Activated B cell treated with CpG ODN at 0.5 μM for 24 hours (primary cell): ENCODE measurements at regions of chr4 and their contacts with region 1.

Region 1: GRCh38 chr4:108650212-108651013 is at the start of gene OSTC:
- DNase-seq: peak; percentile 87
- ATAC-seq: peak; percentile 93
- H3K4me3 Mint-ChIP-seq: peak within 1 kb of the TSS; percentile 97
- H3K27ac Mint-ChIP-seq: peak within 1 kb of the TSS; percentile 97
- H3K4me1 Mint-ChIP-seq: peaks cover 38% of the 10 kb centered on the region
- H3K27me3 Mint-ChIP-seq: no peaks in the 10 kb centered on the region
- CTCF ChIP-seq: no peak
- total RNA-seq, gene OSTC: 56.7 and 60.1 TPM in 2 replicates

Region 2: GRCh38 chr4:107719922-107720722 is 930.3 kb before region 1 on chr4 and contains the start of gene PAPSS1:
- CTCF ChIA-PET with region 1: no interaction called
- POLR2A ChIA-PET with region 1: interaction called, 9 read pairs
- intact Hi-C with region 1: loop called (anchors 1 kb)
- DNase-seq: peak; percentile 92
- ATAC-seq: peak; percentile 87
- H3K4me3 Mint-ChIP-seq: peak within 1 kb of the TSS; percentile 97
- H3K27ac Mint-ChIP-seq: peak within 1 kb of the TSS; percentile 96
- H3K4me1 Mint-ChIP-seq: peaks cover 34% of the 10 kb centered on the region
- H3K27me3 Mint-ChIP-seq: no peaks in the 10 kb centered on the region
- CTCF ChIP-seq: no peak
- total RNA-seq, gene PAPSS1: 31.8 and 34.2 TPM in 2 replicates

Region 3: DNA sequence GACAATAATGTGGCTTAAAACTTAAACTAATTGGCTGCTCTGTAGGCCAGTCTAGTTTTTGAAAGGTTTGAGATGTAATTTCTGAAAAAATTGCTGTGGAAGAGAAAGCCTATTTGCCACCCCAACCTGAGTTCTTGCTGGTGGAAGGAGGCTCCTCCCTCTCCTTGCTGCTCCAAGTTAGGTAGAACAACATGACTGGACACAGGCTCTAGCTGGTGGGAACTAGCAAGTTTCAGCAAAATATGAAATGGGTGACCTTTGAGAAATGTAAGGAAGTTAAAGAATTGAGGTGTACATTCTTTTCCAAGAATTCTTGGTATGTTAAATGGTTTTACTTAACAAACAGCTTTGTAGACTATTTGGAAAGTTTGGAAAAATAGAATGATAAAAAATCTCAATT is 22.0 kb before region 1 on chr4:
- CTCF ChIA-PET with region 1: no interaction called
- POLR2A ChIA-PET with region 1: interaction called, 22 read pairs
- intact Hi-C with region 1: no loop called
- DNase-seq: no peak
- ATAC-seq: no peak
- H3K4me3 Mint-ChIP-seq: no peak overlapping the region
- H3K27ac Mint-ChIP-seq: no peak overlapping the region
- H3K4me1 Mint-ChIP-seq: peaks cover 11% of the 10 kb centered on the region
- H3K27me3 Mint-ChIP-seq: no peaks in the 10 kb centered on the region
- CTCF ChIP-seq: no peak

Region 4: DNA sequence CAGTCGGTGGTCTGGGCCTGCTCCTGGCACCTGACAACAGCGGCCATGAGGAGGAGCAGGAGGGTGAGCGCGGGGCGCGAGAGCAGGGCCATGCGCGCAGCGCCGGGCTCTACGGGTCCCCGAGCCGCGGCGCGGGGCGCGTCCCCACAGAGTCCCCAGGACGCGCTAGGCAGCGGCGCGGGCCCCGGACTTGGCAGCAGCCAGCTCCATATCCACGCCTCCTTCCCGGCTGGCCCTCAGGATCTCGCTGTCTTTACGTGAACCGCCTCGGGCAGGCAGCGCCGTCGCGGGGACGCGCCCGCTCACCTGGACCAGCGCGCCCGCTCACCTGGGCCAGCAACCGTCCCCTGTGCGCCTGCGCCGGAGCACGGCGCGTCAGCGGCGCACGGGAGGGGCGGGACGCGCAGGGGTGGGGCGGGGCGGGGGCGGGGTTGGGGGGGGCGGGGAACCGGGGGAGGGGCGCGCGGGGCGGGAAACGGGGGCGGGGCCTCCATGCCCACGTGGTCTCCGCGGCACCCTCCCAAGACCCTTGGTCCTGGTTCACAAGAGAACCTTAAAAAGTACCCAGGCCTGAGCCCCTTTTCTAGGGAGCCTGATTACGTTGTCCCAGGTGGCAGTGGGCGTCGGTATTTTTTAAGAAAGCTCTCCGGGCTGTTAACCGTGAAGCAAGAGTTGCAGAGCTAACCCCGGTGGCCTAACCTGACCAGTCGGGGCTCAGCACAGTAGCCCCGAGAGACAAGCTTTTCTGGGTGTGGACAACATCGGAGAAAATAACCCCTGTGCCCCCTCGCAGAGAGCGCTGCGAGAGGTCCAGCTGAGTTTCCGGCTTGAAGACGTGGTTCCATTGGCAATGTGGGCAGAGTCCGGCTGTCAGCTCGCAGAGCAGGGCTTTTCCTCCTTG is 1079.6 kb after region 1 on chr4 and contains the start of gene PLA2G12A:
- CTCF ChIA-PET with region 1: no interaction called
- POLR2A ChIA-PET with region 1: interaction called, 3 read pairs
- intact Hi-C with region 1: loop called (anchors 1 kb)
- DNase-seq: peak; percentile 77
- ATAC-seq: peak; percentile 90
- H3K4me3 Mint-ChIP-seq: peak within 1 kb of the TSS; percentile 90
- H3K27ac Mint-ChIP-seq: peak within 1 kb of the TSS; percentile 79
- H3K4me1 Mint-ChIP-seq: peaks cover 12% of the 10 kb centered on the region
- H3K27me3 Mint-ChIP-seq: no peaks in the 10 kb centered on the region
- CTCF ChIP-seq: no peak
- total RNA-seq, gene PLA2G12A: 6.7 and 9.6 TPM in 2 replicates

Region 5: DNA sequence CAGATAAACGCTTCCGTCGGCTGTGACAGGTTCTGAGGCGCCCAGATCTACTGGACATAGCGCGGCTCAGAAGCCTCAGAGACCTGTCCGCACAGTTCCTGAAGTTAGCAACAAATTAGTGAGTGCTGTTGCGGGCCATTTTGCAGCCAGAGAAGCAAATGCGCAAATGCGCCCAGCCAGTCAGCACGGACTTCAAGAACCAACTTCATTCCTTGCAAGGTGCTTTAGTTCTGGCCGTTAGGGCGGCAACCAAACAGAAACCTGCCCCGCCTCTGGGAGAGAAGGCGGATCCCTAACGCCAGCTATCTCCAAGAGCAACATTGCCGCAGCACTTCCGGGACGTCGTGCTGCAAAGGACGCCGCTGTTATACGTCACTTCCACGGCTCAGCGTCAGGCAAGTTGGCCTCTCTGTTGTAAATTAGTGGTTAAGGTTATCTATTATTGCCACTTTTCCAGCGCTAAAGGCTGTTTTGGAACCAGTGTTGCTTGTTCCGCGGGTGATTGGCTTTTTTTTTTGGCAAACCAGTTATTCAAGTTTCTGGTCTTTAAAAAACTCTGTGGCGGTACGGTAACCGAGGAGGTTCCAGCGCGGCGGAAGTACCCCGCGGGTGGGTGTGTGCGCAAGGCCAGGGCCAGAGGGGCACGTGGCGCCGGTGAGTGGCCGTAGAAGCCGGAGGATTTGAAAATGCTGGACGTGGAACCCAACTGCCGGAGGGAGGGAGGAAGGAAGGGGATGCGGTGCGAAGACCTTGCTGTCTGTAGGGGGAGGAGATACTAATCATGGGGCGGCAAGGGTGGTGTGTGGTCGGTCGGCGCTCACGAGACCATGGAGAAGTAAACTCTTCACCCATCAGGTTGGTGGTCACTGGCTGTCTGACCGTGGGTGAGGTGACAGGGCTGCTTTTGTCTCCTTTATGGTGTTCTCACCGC is 1165.0 kb after region 1 on chr4 and contains the start of gene GAR1:
- CTCF ChIA-PET with region 1: no interaction called
- POLR2A ChIA-PET with region 1: no interaction called
- intact Hi-C with region 1: loop called (anchors 1 kb)
- DNase-seq: peak; percentile 70
- ATAC-seq: peak; percentile 97
- H3K4me3 Mint-ChIP-seq: peak within 1 kb of the TSS; percentile 94
- H3K27ac Mint-ChIP-seq: peak within 1 kb of the TSS; percentile 93
- H3K4me1 Mint-ChIP-seq: peaks cover 28% of the 10 kb centered on the region
- H3K27me3 Mint-ChIP-seq: no peaks in the 10 kb centered on the region
- CTCF ChIP-seq: no peak
- total RNA-seq, gene GAR1: 21.0 and 23.1 TPM in 2 replicates